Activated CD4-positive, alpha-beta T cell treated with anti-CD3 and anti-CD28 coated beads, Interleukin-2, amount 10 ng/mL, durations not matched to agents 24 days and 14 days (primary cell): ENCODE measurements at regions of chr4 and their contacts with region 1.

Region 1: DNA sequence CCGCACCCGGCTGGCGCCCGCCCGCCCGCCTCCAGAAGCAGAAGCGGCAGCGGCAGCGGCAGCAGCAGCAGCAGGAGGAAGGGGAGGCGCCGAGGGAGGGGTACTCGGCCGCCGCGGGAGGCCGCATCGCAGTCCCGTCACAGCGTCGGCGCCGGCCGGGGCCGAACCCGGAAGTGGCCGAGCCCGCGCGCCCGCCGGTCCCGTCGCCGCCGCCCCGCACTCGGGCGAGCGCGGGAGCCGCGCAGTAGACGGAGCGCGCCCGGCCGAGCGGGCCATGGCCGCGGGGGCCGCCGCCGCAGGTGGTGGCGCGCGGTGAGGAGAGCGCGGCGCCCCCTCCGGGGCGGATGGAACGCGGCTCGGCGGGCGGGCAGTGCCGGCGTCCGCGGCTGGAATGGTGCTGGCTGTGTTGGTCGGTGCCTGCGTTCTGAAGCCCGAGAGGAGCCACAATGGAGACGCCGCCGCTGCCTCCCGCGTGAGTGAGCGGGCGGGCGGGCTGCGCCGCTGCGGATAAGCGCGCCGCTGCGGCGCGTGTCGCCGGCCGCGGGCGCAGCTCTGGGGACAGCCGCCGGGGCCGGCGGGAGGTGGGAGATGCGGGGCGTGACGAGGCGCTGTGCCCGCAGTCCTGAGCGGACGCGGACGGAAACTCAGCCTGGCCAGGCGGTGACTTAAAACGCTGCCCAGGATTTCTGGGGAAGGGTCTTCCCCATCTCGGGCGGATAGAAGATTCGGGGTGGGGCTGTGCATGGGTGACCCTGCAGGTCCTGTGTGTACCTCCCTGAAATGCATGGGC is at the start of gene KLHL2:
- DNase-seq: peak; percentile 93
- H3K4me3 Mint-ChIP-seq: peak within 1 kb of the TSS; percentile 93
- H3K27ac Mint-ChIP-seq: peak within 1 kb of the TSS; percentile 90
- H3K4me1 Mint-ChIP-seq: peaks cover 62% of the 10 kb centered on the region
- H3K27me3 Mint-ChIP-seq: no peaks in the 10 kb centered on the region
- total RNA-seq, gene KLHL2: 39.5 and 42.7 TPM in 2 replicates

Region 2: GRCh38 chr4:165112368-165113139 is 95.1 kb before region 1 on chr4 and contains the start of gene TMEM192:
- intact Hi-C with region 1: loop called (anchors 2 kb)
- DNase-seq: peak; percentile 97
- H3K4me3 Mint-ChIP-seq: peak within 1 kb of the TSS; percentile 97
- H3K27ac Mint-ChIP-seq: peak within 1 kb of the TSS; percentile 94
- H3K4me1 Mint-ChIP-seq: peaks cover 13% of the 10 kb centered on the region
- H3K27me3 Mint-ChIP-seq: peaks cover 11% of the 10 kb centered on the region
- total RNA-seq, gene TMEM192: 10.0 and 11.0 TPM in 2 replicates

Region 3: DNA sequence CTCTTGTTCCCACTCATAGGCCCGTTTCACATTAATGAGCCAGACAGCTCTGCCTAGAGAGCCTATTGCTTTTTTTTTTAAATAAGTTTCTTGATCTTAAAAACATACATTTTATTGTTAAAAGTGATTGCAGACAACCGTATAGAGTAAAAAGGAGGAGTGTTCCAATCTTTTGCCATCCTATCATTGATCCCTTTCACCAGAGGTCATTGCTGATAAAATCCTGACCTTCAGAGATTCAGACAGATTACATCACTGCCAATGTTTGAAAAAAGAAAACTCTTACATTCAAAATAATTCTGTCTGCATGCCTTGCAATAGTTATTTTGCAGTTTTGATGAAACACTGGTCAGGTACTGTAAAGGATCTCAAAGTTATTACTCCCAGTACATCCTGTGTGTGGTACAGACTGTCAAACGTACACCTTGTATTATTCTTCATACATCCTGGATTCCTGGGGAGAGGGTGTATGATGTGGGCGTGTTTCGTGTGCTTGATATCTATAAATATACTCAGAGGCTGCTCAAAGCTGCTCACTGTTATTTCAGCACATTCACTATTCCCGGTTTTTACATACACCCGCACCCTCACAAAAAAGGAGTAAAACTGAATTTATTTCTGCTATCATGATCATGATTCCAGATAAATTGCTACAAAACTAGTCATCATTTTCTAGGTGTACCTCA is 15.7 kb before region 1 on chr4:
- intact Hi-C with region 1: loop called (anchors 1 kb)
- DNase-seq: no peak
- H3K4me3 Mint-ChIP-seq: peak overlapping the region; percentile 16
- H3K27ac Mint-ChIP-seq: peak overlapping the region; percentile 85
- H3K4me1 Mint-ChIP-seq: peaks cover 31% of the 10 kb centered on the region
- H3K27me3 Mint-ChIP-seq: no peaks in the 10 kb centered on the region

Region 4: DNA sequence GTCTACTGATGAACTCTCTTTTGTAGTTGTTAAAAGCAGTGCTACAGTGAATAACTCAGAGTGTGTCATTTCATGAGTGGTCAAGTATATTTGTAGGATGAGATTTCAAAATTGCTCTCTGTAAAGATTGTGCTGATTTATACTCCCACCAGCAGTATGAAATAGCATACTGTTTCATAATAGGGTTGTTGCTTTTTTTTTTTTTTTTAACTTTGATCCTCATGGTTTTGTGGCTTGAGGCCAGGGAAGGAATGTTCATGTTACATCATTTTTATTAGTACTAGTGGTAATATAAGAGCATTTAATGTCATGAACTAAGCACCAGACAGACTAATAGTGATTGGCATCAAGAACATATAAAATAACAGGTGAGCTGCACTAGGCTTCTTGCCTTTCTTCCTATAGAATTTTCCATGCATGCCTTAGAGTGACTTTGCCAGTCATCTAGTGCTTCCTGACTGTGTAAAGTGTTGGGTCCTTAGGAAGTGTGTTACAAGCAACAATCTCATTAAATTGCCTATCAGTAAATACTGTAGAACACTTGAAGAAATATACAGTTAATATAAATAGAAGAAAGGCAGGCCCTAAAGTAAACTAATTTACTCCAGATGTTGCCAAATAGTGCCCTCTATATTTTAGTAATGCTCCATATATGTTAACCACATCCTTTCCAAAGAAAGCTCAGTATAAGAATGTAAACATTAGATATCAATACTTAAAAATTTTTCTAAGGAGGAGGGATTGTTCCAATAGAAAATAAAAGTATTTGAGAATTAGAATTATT is 81.2 kb after region 1 on chr4:
- intact Hi-C with region 1: loop called (anchors 5 kb)
- DNase-seq: no peak
- H3K4me3 Mint-ChIP-seq: peak overlapping the region; percentile 6
- H3K27ac Mint-ChIP-seq: peak overlapping the region; percentile 65
- H3K4me1 Mint-ChIP-seq: peaks cover 39% of the 10 kb centered on the region
- H3K27me3 Mint-ChIP-seq: no peaks in the 10 kb centered on the region

Region 5: GRCh38 chr4:165327211-165328100 is 119.8 kb after region 1 on chr4 and contains the start of gene MSMO1:
- intact Hi-C with region 1: loop called (anchors 1 kb)
- DNase-seq: peak; percentile 100
- H3K4me3 Mint-ChIP-seq: no peak within 1 kb of the TSS
- H3K27ac Mint-ChIP-seq: peak within 1 kb of the TSS; percentile 73
- H3K4me1 Mint-ChIP-seq: peaks cover 38% of the 10 kb centered on the region
- H3K27me3 Mint-ChIP-seq: no peaks in the 10 kb centered on the region
- total RNA-seq, gene MSMO1: 82.0 and 82.3 TPM in 2 replicates